GM12878 (cell line): ENCODE measurements at regions of chr14 and their contacts with region 1.

Region 1: DNA sequence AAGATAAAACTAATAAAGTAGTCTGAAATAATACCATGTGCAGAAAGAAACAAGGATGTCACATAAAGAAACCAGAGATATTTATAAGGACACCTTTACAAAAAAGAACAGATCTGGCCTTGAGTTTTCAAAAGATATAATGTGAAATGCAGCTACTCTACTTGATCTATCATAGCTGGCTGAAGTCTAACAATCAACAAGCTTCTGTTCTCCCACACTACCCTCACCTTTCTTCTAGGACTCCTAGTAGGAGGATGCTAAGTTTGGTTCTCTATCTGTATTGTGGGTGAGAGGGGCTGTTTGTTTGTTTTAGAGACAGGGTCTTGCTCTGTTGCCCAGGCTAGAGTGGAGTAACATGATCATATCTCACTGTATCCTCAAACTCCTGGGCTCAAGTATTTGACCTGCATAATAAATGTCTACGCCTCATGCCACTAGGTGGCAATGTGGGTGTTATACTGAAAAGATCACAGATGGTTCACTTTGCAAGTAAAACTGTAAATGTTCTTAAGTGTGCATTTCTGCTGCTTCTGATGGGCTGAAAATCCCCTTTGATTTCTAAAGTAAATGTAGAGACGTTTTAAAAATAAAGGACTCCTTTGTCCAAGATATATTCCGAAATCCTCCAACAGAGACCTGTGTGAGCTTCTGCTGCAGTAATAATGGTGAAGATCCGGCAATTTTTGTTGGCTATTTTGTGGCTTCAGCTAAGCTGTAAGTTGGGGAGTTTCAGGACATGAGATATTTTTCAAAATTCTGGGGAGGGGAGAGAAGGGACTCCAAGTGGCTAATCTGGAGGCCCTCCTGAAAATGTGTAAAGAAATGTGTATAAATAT is 269.3 kb downstream of the DAD1 start:
- DNase-seq: peak; percentile 42
- ATAC-seq: peak; percentile 97
- H3K4me3 ChIP-seq: no peak overlapping the region
- H3K27ac ChIP-seq: no peak overlapping the region
- H3K4me1 ChIP-seq: no peaks in the 10 kb centered on the region
- H3K27me3 ChIP-seq: no peaks in the 10 kb centered on the region
- CTCF ChIP-seq: peak; percentile 68 to 80 (median 73); a peak in 5 of 6 replicates
- EP300 ChIP-seq: no peak
- POLR2A ChIP-seq: no peak
- RAD21 ChIP-seq: peak; percentile 83

Region 2: DNA sequence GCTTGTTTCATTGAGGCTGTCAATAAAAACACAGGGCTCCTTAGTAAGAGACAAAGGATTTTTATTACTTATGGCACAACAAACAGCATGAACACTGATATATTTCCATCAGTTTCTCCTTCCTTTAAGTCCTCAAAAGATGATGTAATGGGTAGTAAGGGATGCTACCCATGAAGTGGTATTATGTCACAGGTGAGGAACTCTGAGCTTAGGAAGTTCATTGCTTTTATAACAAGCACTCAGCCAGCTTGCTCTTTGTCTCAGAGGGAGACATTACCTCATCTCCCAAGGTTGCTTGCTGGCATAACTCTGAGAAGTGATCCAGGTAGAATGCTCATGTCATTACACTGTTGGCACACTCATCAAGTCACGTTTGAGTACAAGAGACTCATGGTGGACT is 359.1 kb before region 1 on chr14:
- CTCF ChIA-PET with region 1: no interaction called
- POLR2A ChIA-PET with region 1: no interaction called
- RAD21 ChIA-PET with region 1: no interaction called
- SMC1A ChIA-PET with region 1: no interaction called
- in situ Hi-C with region 1: no loop called
- intact Hi-C with region 1: no loop called
- DNase-seq: no peak
- ATAC-seq: no peak
- H3K4me3 ChIP-seq: no peak overlapping the region
- H3K27ac ChIP-seq: no peak overlapping the region
- H3K4me1 ChIP-seq: no peaks in the 10 kb centered on the region
- H3K27me3 ChIP-seq: no peaks in the 10 kb centered on the region; a peak in 1 of 4 replicates
- CTCF ChIP-seq: no peak
- EP300 ChIP-seq: no peak
- POLR2A ChIP-seq: no peak
- RAD21 ChIP-seq: no peak

Region 3: GRCh38 chr14:22163051-22163450 is 156.7 kb before region 1 on chr14:
- CTCF ChIA-PET with region 1: interaction called, 11 read pairs
- POLR2A ChIA-PET with region 1: no interaction called
- RAD21 ChIA-PET with region 1: interaction called, 8 read pairs
- SMC1A ChIA-PET with region 1: interaction called, 10 read pairs
- in situ Hi-C with region 1: no loop called
- intact Hi-C with region 1: loop called (anchors 10 kb)
- DNase-seq: no peak
- ATAC-seq: peak; percentile 64
- H3K4me3 ChIP-seq: no peak overlapping the region
- H3K27ac ChIP-seq: no peak overlapping the region
- H3K4me1 ChIP-seq: no peaks in the 10 kb centered on the region
- H3K27me3 ChIP-seq: peaks cover 2% of the 10 kb centered on the region in 2 experiments; a peak in 2 of 4 replicates
- CTCF ChIP-seq: peak in 2 of 3 experiments; percentile 3 to 28; a peak in 3 of 6 replicates
- EP300 ChIP-seq: no peak
- POLR2A ChIP-seq: no peak
- RAD21 ChIP-seq: peak; percentile 40

Region 4: DNA sequence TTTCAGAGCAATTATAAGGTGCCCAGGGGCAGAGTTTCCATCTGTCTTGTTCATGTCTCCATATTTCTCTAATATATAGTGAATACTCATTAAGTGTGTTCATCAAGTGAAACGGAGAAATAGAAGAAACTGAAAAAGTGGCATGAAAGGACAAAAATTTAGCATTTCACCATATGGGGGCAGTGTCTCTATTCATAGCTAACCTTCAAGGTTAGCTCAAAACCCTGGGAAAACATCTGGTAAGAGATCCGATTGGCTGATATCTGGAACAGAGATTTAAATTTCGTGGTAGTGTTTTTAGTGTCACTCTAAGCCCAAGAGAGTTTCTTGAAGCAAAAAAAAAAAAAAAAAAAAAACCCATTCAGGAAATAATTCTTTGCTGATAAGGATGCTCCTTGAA is 98.2 kb before region 1 on chr14:
- CTCF ChIA-PET with region 1: interaction called, 37 read pairs
- POLR2A ChIA-PET with region 1: no interaction called
- RAD21 ChIA-PET with region 1: interaction called, 13 read pairs
- SMC1A ChIA-PET with region 1: interaction called, 12 read pairs
- in situ Hi-C with region 1: no loop called
- intact Hi-C with region 1: loop called (anchors 5 kb)
- DNase-seq: no peak
- ATAC-seq: peak; percentile 58
- H3K4me3 ChIP-seq: no peak overlapping the region
- H3K27ac ChIP-seq: no peak overlapping the region
- H3K4me1 ChIP-seq: no peaks in the 10 kb centered on the region
- H3K27me3 ChIP-seq: no peaks in the 10 kb centered on the region; a peak in 2 of 4 replicates
- CTCF ChIP-seq: peak; percentile 31 to 49 (median 43); a peak in 4 of 6 replicates
- EP300 ChIP-seq: no peak
- POLR2A ChIP-seq: no peak
- RAD21 ChIP-seq: peak; percentile 25; the same call in 1 of the 2 replicates

Region 5: GRCh38 chr14:22282417-22282816 is 37.3 kb before region 1 on chr14:
- CTCF ChIA-PET with region 1: interaction called, 52 read pairs
- POLR2A ChIA-PET with region 1: no interaction called
- RAD21 ChIA-PET with region 1: interaction called, 9 read pairs
- SMC1A ChIA-PET with region 1: interaction called, 17 read pairs
- in situ Hi-C with region 1: no loop called
- intact Hi-C with region 1: no loop called
- DNase-seq: no peak
- ATAC-seq: peak; percentile 93
- H3K4me3 ChIP-seq: no peak overlapping the region
- H3K27ac ChIP-seq: no peak overlapping the region
- H3K4me1 ChIP-seq: peaks cover 5% of the 10 kb centered on the region; the same call in 1 of the 2 replicates
- H3K27me3 ChIP-seq: peaks cover 0 to 3% of the 10 kb centered on the region in 2 experiments; a peak in 2 of 4 replicates
- CTCF ChIP-seq: no peak
- EP300 ChIP-seq: peak in 1 of 2 experiments; percentile 48; a peak in 1 of 4 replicates
- POLR2A ChIP-seq: no peak
- RAD21 ChIP-seq: no peak

Region 6: GRCh38 chr14:22333422-22334276 is 13.9 kb after region 1 on chr14:
- CTCF ChIA-PET with region 1: interaction called, 74 read pairs
- POLR2A ChIA-PET with region 1: no interaction called
- RAD21 ChIA-PET with region 1: interaction called, 19 read pairs
- SMC1A ChIA-PET with region 1: interaction called, 53 read pairs
- in situ Hi-C with region 1: no loop called
- intact Hi-C with region 1: no loop called
- DNase-seq: no peak
- ATAC-seq: peak; percentile 64
- H3K4me3 ChIP-seq: no peak overlapping the region
- H3K27ac ChIP-seq: no peak overlapping the region
- H3K4me1 ChIP-seq: no peaks in the 10 kb centered on the region
- H3K27me3 ChIP-seq: no peaks in the 10 kb centered on the region
- CTCF ChIP-seq: no peak
- EP300 ChIP-seq: peak in 1 of 2 experiments; percentile 26; a peak in 1 of 4 replicates
- POLR2A ChIP-seq: no peak
- RAD21 ChIP-seq: no peak

Region 7: DNA sequence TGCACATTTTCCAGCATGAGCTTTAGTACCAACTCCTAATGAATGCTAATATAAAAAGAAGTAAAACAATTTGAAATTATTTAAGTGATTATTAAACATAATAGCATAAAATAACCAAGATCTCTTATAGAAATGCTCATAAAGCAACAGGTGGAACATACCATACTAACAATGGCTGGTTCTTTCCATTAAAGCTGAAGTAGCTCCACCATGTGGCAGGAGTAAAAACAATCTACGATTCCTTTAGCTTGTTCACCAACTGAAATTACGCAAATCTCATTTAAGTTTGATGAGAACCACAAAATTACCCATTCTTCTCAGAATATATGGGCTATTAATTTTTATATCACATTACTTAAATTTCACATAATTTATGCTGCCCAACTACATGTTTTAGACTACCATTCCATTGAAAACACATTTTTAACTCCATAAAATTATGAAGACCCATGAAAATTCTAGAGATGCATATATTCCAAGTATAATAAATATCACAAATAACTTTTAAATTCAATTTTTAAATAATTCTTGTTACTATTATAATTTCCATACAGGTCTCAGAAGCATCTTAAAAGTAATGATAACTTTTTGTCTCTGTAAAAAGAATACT is 55.7 kb after region 1 on chr14:
- CTCF ChIA-PET with region 1: interaction called, 333 read pairs
- POLR2A ChIA-PET with region 1: interaction called, 6 read pairs
- RAD21 ChIA-PET with region 1: interaction called, 174 read pairs
- SMC1A ChIA-PET with region 1: interaction called, 238 read pairs
- in situ Hi-C with region 1: loop called (anchors 5 kb)
- intact Hi-C with region 1: loop called (anchors 1 kb)
- DNase-seq: no peak
- ATAC-seq: peak; percentile 75
- H3K4me3 ChIP-seq: no peak overlapping the region
- H3K27ac ChIP-seq: no peak overlapping the region
- H3K4me1 ChIP-seq: no peaks in the 10 kb centered on the region
- H3K27me3 ChIP-seq: no peaks in the 10 kb centered on the region
- CTCF ChIP-seq: peak; percentile 50 to 60 (median 50)
- EP300 ChIP-seq: no peak
- POLR2A ChIP-seq: no peak
- RAD21 ChIP-seq: peak; percentile 79

Region 8: DNA sequence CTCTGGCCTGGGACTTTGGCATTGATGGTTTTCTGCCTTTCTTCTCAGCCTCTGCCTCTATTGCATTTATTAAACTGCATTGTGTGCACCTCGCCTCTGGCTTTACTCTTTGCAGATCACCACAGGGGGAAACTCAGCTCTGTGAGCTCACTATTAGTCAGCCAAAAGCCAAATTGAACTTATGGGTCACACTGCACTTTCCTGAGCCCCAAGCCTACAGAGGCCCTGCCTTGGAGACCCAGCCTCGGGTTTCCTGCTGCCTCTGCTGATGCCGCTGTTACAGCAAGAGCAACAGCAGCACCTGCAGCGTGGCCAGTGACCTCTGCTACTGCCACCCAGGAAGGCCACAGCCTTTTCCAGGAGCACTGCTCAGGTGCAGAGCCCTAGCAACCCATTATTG is 146.7 kb after region 1 on chr14:
- CTCF ChIA-PET with region 1: interaction called, 165 read pairs
- POLR2A ChIA-PET with region 1: interaction called, 5 read pairs
- RAD21 ChIA-PET with region 1: interaction called, 59 read pairs
- SMC1A ChIA-PET with region 1: interaction called, 132 read pairs
- in situ Hi-C with region 1: loop called (anchors 5 kb)
- intact Hi-C with region 1: no loop called
- DNase-seq: no peak
- ATAC-seq: peak; percentile 71
- H3K4me3 ChIP-seq: no peak overlapping the region
- H3K27ac ChIP-seq: peak overlapping the region; percentile 86
- H3K4me1 ChIP-seq: peaks cover 52% of the 10 kb centered on the region
- H3K27me3 ChIP-seq: no peaks in the 10 kb centered on the region
- CTCF ChIP-seq: 0 out of 6 replicates have a peak, but pooled peaks of 1 of the 3 experiments have one; percentile 12
- EP300 ChIP-seq: no peak
- POLR2A ChIP-seq: no peak
- RAD21 ChIP-seq: peak; percentile 40; the same call in 1 of the 2 replicates